Activated T-helper 1 cell treated with anti-CD3 and anti-CD28 coated beads, Interleukin-12 subunit alpha, Interleukin-12 subunit beta, Interleukin-2, Interleukin-4 antibody, amounts not matched to agents 30 ng/mL and 10 ng/mL and 1 ng/mL, durations not matched to agents 14 hours and 24 hours and 36 hours (primary cell): ENCODE measurements at regions of chr10 and their contacts with region 1.

Region 1: DNA sequence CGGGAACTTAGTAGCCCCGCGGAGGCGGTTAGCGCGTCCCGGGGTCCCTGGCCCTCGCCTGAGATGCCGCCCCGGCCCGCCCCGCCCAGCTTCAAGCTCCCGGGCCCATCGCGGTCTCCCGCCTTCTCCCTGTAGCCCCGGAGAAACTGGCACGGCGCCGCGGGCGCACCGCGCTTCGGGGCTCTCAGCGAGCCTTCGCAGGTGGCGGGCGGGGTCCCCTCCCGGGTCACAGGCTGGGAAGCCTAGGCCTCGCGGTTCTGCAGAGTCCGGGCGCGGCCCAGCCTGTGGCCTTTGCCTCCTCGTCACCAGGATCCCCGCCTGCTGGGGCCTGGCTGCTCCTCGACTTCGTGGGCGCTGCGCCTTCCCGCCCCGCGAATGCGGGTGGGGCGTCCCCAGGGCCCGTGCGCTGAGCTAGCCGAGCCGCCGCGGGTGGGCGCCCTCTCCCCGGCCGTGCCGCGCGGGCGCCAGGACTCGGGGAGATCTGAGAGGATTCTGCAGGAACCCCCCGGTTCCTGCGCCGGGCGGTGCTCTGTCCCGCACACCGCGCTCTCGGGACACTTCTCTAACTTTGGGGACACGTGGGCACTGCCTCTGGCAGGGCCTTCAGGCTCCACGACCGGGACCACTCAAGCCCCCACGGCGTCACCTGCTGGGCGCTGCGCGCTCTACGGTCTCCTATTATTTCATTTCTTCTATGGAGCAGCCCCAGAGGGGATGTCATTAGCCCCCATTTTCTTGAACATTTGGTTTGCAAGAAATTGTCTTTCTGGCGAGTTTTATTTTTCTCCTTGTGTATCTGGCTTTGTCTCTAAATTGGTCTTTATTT is 682 bp upstream of the RGS10 start:
- DNase-seq: peak; percentile 50
- H3K4me3 Mint-ChIP-seq: peak overlapping the region; percentile 84
- H3K27ac Mint-ChIP-seq: peak overlapping the region; percentile 91
- H3K4me1 Mint-ChIP-seq: peaks cover 40% of the 10 kb centered on the region
- H3K27me3 Mint-ChIP-seq: peaks cover 15% of the 10 kb centered on the region

Region 2: DNA sequence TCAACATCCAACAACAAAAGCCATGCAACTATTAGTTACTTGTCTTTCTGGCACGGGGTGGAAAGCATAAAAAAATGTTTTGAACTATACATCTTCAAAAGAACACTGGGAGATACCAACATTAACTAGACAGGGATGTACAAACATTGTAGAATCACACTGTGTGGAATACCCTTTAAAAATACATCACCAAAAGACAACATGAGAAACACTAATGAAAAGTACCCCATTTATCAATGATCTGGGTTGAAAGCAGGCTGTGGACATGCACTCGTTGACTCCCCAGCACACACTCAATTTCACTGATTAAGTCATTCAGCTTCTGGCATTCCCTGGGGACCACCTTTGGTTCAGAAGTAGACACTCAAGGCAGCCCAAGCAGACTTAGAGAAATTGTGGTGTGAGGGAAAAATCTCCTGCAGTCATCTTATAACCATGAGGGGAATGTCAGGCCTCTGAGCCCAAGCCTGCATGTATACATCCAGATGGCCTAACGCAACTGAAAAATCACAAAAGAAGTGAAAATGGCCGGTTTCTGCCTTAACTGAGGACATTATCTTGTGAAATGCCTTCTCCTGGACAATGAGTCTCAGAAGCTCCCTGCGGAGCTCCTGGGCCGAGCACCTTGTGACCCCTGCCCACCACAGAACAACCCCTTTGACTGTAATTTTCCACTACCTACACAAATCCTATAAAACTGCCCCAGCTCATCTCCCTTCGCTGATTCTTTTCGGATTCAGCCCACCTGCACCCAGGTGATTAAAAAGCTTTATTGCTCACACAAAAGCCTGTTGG is 841.5 kb before region 1 on chr10:
- intact Hi-C with region 1: no loop called
- DNase-seq: no peak
- H3K4me3 Mint-ChIP-seq: no peak overlapping the region
- H3K27ac Mint-ChIP-seq: no peak overlapping the region
- H3K4me1 Mint-ChIP-seq: peaks cover 33% of the 10 kb centered on the region
- H3K27me3 Mint-ChIP-seq: no peaks in the 10 kb centered on the region

Region 3: GRCh38 chr10:118901380-118901779 is 641.8 kb before region 1 on chr10:
- intact Hi-C with region 1: no loop called
- DNase-seq: no peak
- H3K4me3 Mint-ChIP-seq: no peak overlapping the region
- H3K27ac Mint-ChIP-seq: no peak overlapping the region
- H3K4me1 Mint-ChIP-seq: no peaks in the 10 kb centered on the region
- H3K27me3 Mint-ChIP-seq: no peaks in the 10 kb centered on the region

Region 4: GRCh38 chr10:119131512-119132240 is 411.5 kb before region 1 on chr10:
- intact Hi-C with region 1: loop called (anchors 2 kb)
- DNase-seq: peak; percentile 65
- H3K4me3 Mint-ChIP-seq: peak overlapping the region; percentile 80
- H3K27ac Mint-ChIP-seq: peak overlapping the region; percentile 92
- H3K4me1 Mint-ChIP-seq: peaks cover 66% of the 10 kb centered on the region
- H3K27me3 Mint-ChIP-seq: no peaks in the 10 kb centered on the region

Region 5: GRCh38 chr10:119305860-119306513 is 237.2 kb before region 1 on chr10:
- intact Hi-C with region 1: loop called (anchors 5 kb)
- DNase-seq: peak; percentile 82
- H3K4me3 Mint-ChIP-seq: peak overlapping the region; percentile 79
- H3K27ac Mint-ChIP-seq: peak overlapping the region; percentile 100
- H3K4me1 Mint-ChIP-seq: peaks cover 89% of the 10 kb centered on the region
- H3K27me3 Mint-ChIP-seq: peaks cover 4% of the 10 kb centered on the region

Region 6: DNA sequence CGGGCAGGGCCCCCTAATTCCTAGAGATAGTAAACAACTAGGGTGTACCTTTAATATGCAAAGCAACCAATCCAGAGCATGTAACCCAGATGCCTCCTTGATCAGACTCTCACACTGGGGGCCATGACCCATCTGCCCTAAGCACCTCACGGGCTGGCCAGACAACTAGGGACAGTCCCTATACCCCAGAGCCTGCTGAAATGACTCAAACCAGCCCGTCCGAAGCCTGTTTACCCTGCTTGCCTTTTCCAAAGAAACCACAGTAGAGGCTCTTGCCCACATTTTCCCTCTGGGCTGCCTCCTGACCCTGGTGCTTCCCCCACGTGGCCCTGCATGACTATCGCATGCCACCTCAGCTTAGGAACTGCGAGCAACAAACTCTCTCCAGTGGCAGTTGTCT is 46.9 kb before region 1 on chr10:
- intact Hi-C with region 1: loop called (anchors 1 kb)
- DNase-seq: no peak
- H3K4me3 Mint-ChIP-seq: peak overlapping the region; percentile 64
- H3K27ac Mint-ChIP-seq: peak overlapping the region; percentile 87
- H3K4me1 Mint-ChIP-seq: peaks cover 79% of the 10 kb centered on the region
- H3K27me3 Mint-ChIP-seq: no peaks in the 10 kb centered on the region

Region 7: DNA sequence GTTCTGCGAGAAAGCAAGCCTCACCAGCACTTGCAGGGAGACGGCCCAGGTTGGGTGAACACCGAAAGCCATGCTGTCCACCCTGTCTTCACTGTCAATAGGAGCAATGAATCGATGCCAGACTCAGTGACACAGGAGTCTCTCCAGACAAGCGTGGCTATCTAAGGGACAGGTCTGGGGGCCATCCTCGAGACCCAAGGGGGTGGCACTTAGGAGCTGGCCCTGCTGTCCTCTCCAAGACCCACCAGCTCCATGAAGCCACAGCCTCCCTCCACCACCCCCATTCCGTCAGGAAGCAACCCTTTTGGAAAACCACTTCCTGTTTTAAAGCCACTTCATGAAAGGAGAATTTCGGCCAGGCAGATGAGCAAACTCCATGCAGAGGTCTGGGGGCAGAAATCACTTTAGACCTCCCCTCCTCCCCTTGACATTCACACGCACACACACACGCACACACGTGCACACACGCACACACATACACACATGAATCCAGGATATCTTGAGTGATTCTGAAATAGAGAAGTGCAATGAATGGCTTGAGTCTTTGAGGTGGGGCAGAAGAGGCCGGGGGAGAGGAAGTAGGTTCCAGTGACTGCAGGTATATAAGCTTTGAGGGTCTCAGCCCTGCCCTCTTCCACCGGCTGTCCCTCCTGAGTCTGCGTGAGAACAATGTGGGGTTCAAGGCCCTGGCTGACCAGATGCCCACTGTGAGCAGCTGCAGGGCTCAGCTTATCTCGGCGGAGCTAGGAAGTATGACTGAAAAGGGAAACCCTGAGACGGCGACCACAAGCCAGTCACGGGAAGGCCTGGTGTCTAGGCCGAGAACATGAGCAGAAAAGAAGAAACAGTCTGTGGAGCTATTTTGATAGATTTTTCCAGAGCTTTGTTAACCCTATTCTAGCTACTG is 25.7 kb before region 1 on chr10:
- intact Hi-C with region 1: loop called (anchors 1 kb)
- DNase-seq: peak; percentile 55
- H3K4me3 Mint-ChIP-seq: peak overlapping the region; percentile 54
- H3K27ac Mint-ChIP-seq: peak overlapping the region; percentile 82
- H3K4me1 Mint-ChIP-seq: peaks cover 53% of the 10 kb centered on the region
- H3K27me3 Mint-ChIP-seq: no peaks in the 10 kb centered on the region

Region 8: DNA sequence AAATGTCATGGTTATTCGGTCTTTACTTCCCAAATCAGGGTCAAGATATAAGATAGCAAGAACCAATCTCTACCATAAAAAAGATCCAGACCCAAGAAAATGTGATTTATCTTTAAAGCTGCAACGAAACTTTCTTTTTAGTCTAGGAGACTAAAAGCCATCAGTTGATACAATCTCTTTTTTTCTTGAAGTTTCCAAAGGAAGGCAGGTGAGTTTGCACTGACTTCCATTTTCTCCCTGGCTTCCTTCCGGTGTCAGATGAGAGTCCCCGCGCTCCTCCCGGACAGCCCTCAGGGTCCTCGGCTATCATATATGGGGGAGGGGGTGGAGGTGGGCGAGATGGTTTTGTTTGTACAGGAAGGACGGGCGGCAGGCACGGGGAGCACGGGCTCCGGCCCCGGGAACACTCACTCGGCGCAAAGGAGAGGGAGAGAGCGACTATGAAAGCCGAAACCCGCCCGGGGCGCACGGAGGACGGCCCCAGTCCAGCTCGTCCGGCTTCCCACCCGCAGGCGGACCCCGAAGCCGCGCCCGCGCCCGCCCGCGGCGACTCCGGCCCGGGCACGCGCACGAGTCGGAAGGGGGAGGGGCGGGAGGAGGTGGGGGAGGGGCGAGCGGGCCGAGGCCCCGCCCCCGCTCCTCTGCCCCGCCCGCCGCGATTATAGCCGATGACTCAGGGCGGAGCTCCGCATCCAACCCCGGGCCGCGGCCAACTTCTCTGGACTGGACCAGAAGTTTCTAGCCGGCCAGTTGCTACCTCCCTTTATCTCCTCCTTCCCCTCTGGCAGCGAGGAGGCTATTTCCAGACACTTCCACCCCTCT is 107.7 kb after region 1 on chr10 and contains the start of gene BAG3:
- intact Hi-C with region 1: loop called (anchors 1 kb)
- DNase-seq: peak; percentile 70
- H3K4me3 Mint-ChIP-seq: peak within 1 kb of the TSS; percentile 95
- H3K27ac Mint-ChIP-seq: peak within 1 kb of the TSS; percentile 96
- H3K4me1 Mint-ChIP-seq: peaks cover 50% of the 10 kb centered on the region
- H3K27me3 Mint-ChIP-seq: no peaks in the 10 kb centered on the region
- total RNA-seq, gene BAG3: 30.4 and 30.5 TPM in 2 replicates